ENCODE measurements at regions of chr15 and their contacts with region 1.

Region 1: DNA sequence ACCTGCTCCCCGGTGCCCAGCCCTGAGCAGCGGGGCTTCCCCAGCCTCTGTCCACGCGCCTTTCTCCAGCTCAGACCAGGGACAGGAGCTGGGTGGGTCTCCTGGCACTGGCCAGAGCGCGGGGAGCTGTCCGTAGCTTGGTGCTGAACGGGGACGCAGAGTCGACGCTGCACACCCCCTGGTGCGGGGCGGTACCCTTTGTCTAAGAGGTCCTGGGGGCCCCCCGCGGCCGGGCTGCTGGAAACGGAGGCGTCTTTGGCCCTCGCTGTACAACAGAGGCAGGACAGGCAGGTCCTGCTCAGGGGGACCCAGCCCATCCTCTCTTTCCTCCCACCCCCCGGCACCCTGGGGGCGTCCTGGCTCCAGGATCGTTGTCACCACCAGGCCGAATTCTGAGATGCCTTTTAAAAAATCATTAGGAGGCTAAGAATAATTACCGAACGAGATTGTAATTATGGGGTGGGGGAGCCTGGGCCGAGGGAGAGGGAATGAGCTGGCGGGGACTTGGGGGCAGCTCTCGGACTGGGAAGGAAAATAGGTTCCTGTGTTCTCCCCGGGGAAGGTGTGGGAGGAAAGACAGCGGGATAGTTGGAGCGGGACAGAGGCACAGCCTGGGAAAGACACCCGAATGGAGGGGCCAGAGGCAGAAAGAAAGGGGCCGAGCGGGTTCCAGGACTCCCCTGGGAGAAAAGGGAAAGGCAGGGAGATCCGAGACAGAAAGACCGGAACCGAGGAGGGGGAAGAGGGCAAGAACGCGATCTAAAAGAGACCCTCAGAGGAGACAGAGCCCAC is 4.1 kb upstream of the SKOR1 start:
- DNase-seq: peak; percentile 79
- ATAC-seq: peak; percentile 5
- H3K4me3 Mint-ChIP-seq: peak overlapping the region; percentile 68
- H3K27ac Mint-ChIP-seq: no peak overlapping the region
- H3K4me1 Mint-ChIP-seq: peaks cover 50% of the 10 kb centered on the region
- H3K27me3 Mint-ChIP-seq: peaks cover 97% of the 10 kb centered on the region
- CTCF ChIP-seq: no peak

Region 2: DNA sequence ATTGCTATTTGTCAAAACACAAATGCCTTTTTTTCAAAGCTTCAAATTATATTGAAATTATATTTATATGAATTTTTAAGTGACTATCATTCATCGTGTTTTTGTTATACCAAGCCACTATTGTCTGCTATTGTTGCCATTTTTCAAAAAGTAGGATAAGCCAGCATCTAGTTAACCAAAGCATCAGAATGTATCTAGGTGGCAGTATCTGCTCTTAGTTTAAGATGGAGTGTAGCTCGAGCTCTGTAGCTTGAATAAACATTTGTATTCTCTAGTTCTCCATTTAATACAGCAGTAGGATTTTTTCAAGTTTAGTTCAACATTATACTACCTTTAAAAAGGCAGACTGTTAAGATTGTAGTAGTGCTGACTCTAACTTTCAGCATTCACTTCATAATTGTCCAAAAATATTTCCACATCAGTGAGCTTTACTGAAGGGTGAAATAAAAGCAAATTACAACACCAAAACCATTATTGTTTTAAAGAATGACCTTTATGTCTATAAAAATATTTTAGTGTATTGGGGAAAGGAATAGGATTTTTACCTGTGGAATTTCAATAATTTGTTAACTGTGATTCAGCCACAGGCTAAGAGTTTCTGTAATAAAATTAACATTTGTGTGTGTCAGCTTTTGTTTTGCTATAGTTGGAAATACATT is 319.9 kb before region 1 on chr15:
- CTCF ChIA-PET with region 1: interaction called, 10 read pairs
- POLR2A ChIA-PET with region 1: no interaction called
- DNase-seq: no peak
- ATAC-seq: peak; percentile 47
- H3K4me3 Mint-ChIP-seq: no peak overlapping the region
- H3K27ac Mint-ChIP-seq: no peak overlapping the region
- H3K4me1 Mint-ChIP-seq: peaks cover 19% of the 10 kb centered on the region
- H3K27me3 Mint-ChIP-seq: no peaks in the 10 kb centered on the region
- CTCF ChIP-seq: no peak

Region 3: GRCh38 chr15:67833710-67834511 is 12.7 kb after region 1 on chr15:
- CTCF ChIA-PET with region 1: interaction called, 31 read pairs
- POLR2A ChIA-PET with region 1: no interaction called
- DNase-seq: peak; percentile 84
- ATAC-seq: peak; percentile 33
- H3K4me3 Mint-ChIP-seq: peak overlapping the region; percentile 73
- H3K27ac Mint-ChIP-seq: no peak overlapping the region
- H3K4me1 Mint-ChIP-seq: peaks cover 53% of the 10 kb centered on the region
- H3K27me3 Mint-ChIP-seq: peaks cover 100% of the 10 kb centered on the region
- CTCF ChIP-seq: peak; percentile 30

Region 4: GRCh38 chr15:67839929-67840748 is 19.0 kb after region 1 on chr15 and contains the start of gene RNU6-1:
- CTCF ChIA-PET with region 1: interaction called, 31 read pairs
- POLR2A ChIA-PET with region 1: no interaction called
- DNase-seq: peak; percentile 83
- ATAC-seq: peak; percentile 29
- H3K4me3 Mint-ChIP-seq: peak within 1 kb of the TSS; percentile 90
- H3K27ac Mint-ChIP-seq: peak within 1 kb of the TSS; percentile 97
- H3K4me1 Mint-ChIP-seq: peaks cover 61% of the 10 kb centered on the region
- H3K27me3 Mint-ChIP-seq: peaks cover 58% of the 10 kb centered on the region
- CTCF ChIP-seq: no peak
- total RNA-seq, gene RNU6-1: not detected in 3 replicates